ENCODE measurements at regions of chr3 and their contacts with region 1.

Region 1: GRCh38 chr3:134364061-134364935 is 9.9 kb downstream of the AMOTL2 start:
- DNase-seq: peak; percentile 99
- H3K4me3 ChIP-seq: peak overlapping the region; percentile 23
- H3K27ac ChIP-seq: peak overlapping the region; percentile 90
- H3K4me1 ChIP-seq: peaks cover 64% of the 10 kb centered on the region
- H3K27me3 ChIP-seq: no peaks in the 10 kb centered on the region
- CTCF ChIP-seq: no peak

Region 2: GRCh38 chr3:134299185-134299887 is 65.0 kb before region 1 on chr3:
- CTCF ChIA-PET with region 1: no interaction called
- POLR2A ChIA-PET with region 1: no interaction called
- intact Hi-C with region 1: no loop called
- DNase-seq: peak; percentile 50
- H3K4me3 ChIP-seq: no peak overlapping the region
- H3K27ac ChIP-seq: no peak overlapping the region
- H3K4me1 ChIP-seq: no peaks in the 10 kb centered on the region
- H3K27me3 ChIP-seq: no peaks in the 10 kb centered on the region
- CTCF ChIP-seq: peak; percentile 42; the same call in 1 of the 2 replicates

Region 3: GRCh38 chr3:134326760-134327593 is 37.3 kb before region 1 on chr3:
- CTCF ChIA-PET with region 1: no interaction called
- POLR2A ChIA-PET with region 1: no interaction called
- intact Hi-C with region 1: loop called (anchors 5 kb)
- DNase-seq: peak; percentile 93
- H3K4me3 ChIP-seq: no peak overlapping the region
- H3K27ac ChIP-seq: peak overlapping the region; percentile 74
- H3K4me1 ChIP-seq: peaks cover 46% of the 10 kb centered on the region
- H3K27me3 ChIP-seq: no peaks in the 10 kb centered on the region
- CTCF ChIP-seq: no peak

Region 4: GRCh38 chr3:134464064-134464697 is 99.9 kb after region 1 on chr3:
- CTCF ChIA-PET with region 1: no interaction called
- POLR2A ChIA-PET with region 1: interaction called, 18 read pairs
- intact Hi-C with region 1: no loop called
- DNase-seq: peak; percentile 26
- H3K4me3 ChIP-seq: no peak overlapping the region
- H3K27ac ChIP-seq: no peak overlapping the region
- H3K4me1 ChIP-seq: no peaks in the 10 kb centered on the region
- H3K27me3 ChIP-seq: no peaks in the 10 kb centered on the region
- CTCF ChIP-seq: no peak

Region 5: GRCh38 chr3:135329479-135329878 is 965.2 kb after region 1 on chr3:
- CTCF ChIA-PET with region 1: no interaction called
- POLR2A ChIA-PET with region 1: no interaction called
- intact Hi-C with region 1: no loop called
- DNase-seq: no peak
- H3K4me3 ChIP-seq: no peak overlapping the region
- H3K27ac ChIP-seq: no peak overlapping the region
- H3K4me1 ChIP-seq: no peaks in the 10 kb centered on the region
- H3K27me3 ChIP-seq: no peaks in the 10 kb centered on the region
- CTCF ChIP-seq: no peak

Measured in A673 (cell line).